Mammary epithelial cell (primary cell): ENCODE measurements at regions of chr12 and their contacts with region 1.

Region 1: DNA sequence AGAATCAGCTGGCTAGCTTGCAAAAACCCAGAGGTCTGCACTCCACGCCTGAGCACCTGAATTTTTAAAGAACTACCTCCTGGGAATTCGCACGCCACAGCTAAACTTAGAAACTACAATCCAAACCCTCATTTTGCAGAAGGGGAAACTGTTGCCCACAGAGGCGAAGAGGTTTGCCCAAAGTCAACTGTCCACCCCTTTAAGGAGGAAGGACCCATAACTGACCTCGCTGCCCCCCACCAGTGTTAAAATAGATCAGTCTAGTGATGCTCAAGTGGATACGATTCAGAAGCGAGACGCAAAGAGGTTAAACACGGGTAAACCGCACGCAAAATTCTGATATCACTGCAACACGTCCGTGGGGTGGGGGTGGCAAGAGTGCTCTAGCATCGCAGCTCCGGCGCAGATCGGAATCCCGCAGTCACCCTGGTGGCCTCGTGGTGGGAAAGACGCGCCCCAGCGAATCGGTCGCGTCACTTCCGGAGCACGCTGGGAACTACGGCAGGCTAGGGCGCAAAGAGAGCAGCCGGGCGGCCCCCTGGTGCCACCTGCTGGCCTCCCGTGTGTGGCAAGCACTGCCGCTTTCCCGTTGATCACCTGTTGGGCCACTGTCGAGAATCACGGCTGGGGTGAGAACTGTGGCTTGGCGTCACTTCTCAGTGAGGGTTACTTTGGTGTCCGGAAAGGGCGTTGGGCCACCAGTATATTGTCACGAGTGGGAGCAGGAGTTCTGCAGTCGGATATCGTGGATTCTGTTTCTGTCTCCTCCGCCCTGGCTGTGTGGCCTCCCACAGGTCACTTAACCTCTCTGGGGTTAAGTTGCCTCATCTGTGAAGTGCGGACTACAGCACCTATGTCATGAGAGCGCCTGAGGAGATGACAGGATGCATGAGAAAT is at the start of gene ALKBH2:
- DNase-seq: peak; percentile 84
- H3K4me3 ChIP-seq: peak within 1 kb of the TSS; percentile 59 to 74 (median 65)
- H3K27ac ChIP-seq: peak within 1 kb of the TSS; percentile 70
- H3K4me1 ChIP-seq: peaks cover 13% of the 10 kb centered on the region
- H3K27me3 ChIP-seq: no peaks in the 10 kb centered on the region
- CTCF ChIP-seq: peak; percentile 96 to 98
- total RNA-seq, gene ALKBH2: 15.2 to 23.9 TPM

Region 2: GRCh38 chr12:108514973-108515814 is 578.1 kb before region 1 on chr12 and contains the start of gene FICD:
- CTCF ChIA-PET with region 1: no interaction called
- dilution Hi-C with region 1: no loop called
- in situ Hi-C with region 1: no loop called
- intact Hi-C with region 1: loop called (anchors 5 kb)
- DNase-seq: peak; percentile 99
- H3K4me3 ChIP-seq: peak within 1 kb of the TSS; percentile 71 to 85 (median 81)
- H3K27ac ChIP-seq: peak within 1 kb of the TSS; percentile 52
- H3K4me1 ChIP-seq: peaks cover 9% of the 10 kb centered on the region
- H3K27me3 ChIP-seq: no peaks in the 10 kb centered on the region
- CTCF ChIP-seq: no peak
- total RNA-seq, gene FICD: 5.5 to 5.6 TPM

Region 3: GRCh38 chr12:108633534-108634248 is 459.6 kb before region 1 on chr12 and contains the start of gene SELPLG:
- CTCF ChIA-PET with region 1: no interaction called
- dilution Hi-C with region 1: no loop called
- in situ Hi-C with region 1: loop called in 1 of 2 experiments (anchors 25 kb)
- intact Hi-C with region 1: no loop called
- DNase-seq: no peak
- H3K4me3 ChIP-seq: no peak within 1 kb of the TSS
- H3K27ac ChIP-seq: no peak within 1 kb of the TSS
- H3K4me1 ChIP-seq: peaks cover 25% of the 10 kb centered on the region
- H3K27me3 ChIP-seq: no peaks in the 10 kb centered on the region
- CTCF ChIP-seq: no peak
- total RNA-seq, gene SELPLG: 0.47 to 0.50 TPM

Region 4: GRCh38 chr12:108768591-108769500 is 324.4 kb before region 1 on chr12:
- CTCF ChIA-PET with region 1: no interaction called
- dilution Hi-C with region 1: loop called (anchors 10 kb)
- in situ Hi-C with region 1: no loop called
- intact Hi-C with region 1: no loop called
- DNase-seq: no peak
- H3K4me3 ChIP-seq: no peak overlapping the region
- H3K27ac ChIP-seq: no peak overlapping the region
- H3K4me1 ChIP-seq: peaks cover 15% of the 10 kb centered on the region
- H3K27me3 ChIP-seq: no peaks in the 10 kb centered on the region
- CTCF ChIP-seq: no peak

Region 5: DNA sequence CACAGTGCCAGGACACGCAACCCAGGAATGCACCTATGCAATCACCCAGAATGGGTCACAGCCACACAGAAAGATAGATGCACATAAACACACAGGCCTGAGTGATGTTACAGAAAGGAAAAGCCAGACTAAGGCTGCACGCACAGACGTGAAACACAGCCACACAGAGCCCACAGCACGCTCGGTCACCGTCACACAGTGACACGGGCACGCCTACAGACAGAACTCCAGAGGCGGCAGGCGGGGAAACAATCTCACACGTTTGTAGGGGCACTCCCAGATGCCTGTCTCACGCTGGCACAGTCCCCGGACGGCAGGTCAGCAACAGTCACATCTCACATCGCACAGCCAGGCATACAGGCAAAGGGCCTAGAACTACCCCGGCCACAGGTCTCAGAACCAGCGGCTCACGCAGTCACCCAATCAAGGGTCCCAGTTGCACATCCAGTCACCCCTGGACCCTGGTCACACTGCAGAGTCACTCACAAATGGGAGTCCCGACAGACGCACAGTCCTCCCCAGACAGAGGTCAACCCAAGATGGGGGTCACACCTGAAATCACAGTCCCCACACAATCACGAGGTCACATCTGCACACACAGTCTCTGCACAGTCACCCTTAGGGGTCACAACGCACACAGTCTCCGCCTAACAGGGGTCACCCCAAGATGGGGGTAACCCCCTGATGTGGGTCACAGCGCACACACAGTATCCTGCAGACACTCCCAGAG is 236.7 kb before region 1 on chr12:
- CTCF ChIA-PET with region 1: no interaction called
- dilution Hi-C with region 1: no loop called
- in situ Hi-C with region 1: no loop called
- intact Hi-C with region 1: loop called (anchors 10 kb)
- DNase-seq: peak; percentile 73
- H3K4me3 ChIP-seq: peak overlapping the region; percentile 83 to 94 (median 91)
- H3K27ac ChIP-seq: peak overlapping the region; percentile 97
- H3K4me1 ChIP-seq: peaks cover 28% of the 10 kb centered on the region
- H3K27me3 ChIP-seq: no peaks in the 10 kb centered on the region
- CTCF ChIP-seq: no peak

Region 6: GRCh38 chr12:109016016-109016415 is 77.3 kb before region 1 on chr12:
- CTCF ChIA-PET with region 1: no interaction called
- dilution Hi-C with region 1: no loop called
- in situ Hi-C with region 1: no loop called
- intact Hi-C with region 1: no loop called
- DNase-seq: no peak
- H3K4me3 ChIP-seq: no peak overlapping the region
- H3K27ac ChIP-seq: no peak overlapping the region
- H3K4me1 ChIP-seq: no peaks in the 10 kb centered on the region
- H3K27me3 ChIP-seq: no peaks in the 10 kb centered on the region
- CTCF ChIP-seq: no peak

Region 7: GRCh38 chr12:109027767-109028166 is 65.5 kb before region 1 on chr12:
- CTCF ChIA-PET with region 1: no interaction called
- dilution Hi-C with region 1: loop called (anchors 5 kb)
- in situ Hi-C with region 1: no loop called
- intact Hi-C with region 1: no loop called
- DNase-seq: no peak
- H3K4me3 ChIP-seq: no peak overlapping the region
- H3K27ac ChIP-seq: no peak overlapping the region
- H3K4me1 ChIP-seq: no peaks in the 10 kb centered on the region
- H3K27me3 ChIP-seq: peaks cover 2% of the 10 kb centered on the region
- CTCF ChIP-seq: no peak